Caco-2 (cell line): ENCODE measurements at regions of chr14 and their contacts with region 1.

Region 1: DNA sequence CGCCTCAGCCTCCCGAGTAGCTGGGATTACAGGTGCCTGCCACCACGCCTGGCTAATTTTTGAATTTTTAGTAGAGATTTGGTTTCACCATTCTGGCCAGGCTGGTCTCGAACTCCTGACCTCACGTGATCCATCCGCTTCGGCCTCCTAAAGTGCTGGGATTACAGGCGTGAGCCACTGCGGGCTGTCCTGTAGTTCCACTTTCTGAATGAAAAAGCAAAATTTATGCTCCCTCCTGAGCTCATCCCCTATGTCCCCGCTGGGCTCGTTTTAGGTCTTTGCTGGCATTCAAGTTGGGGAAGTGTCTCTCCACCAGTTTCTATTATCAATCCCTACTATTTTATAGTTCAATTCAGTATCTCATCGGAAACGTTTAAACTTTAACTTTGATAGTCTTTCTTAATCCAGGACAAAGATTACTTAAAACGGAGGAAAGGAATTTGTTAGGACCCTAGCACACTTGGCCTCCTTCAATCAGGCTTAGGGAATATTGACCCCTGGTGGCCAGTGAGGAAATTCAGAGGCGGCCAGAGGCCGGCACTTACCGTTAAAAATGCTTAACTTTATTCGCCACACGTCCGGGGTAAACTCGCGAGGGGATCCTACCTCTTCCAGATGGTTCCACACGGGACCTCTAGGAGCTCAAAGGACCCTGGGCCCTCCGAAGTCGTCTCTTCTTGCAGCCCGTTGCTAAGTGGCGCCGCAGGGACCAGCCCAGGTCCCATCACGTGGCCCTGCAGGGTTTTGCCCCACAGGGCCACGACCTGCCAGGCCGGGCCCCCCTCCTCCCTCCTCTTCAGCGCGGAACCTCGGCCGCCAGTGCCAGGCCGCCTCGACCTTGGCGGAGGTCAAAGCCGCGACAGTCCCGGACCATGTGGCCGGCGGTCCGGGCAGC is 11.4 kb upstream of the DNAL1 start:
- DNase-seq: peak; percentile 56 to 72
- H3K4me3 ChIP-seq: no peak overlapping the region
- H3K4me3 Mint-ChIP-seq: peak overlapping the region; percentile 47
- H3K27ac Mint-ChIP-seq: no peak overlapping the region
- H3K4me1 ChIP-seq: peaks cover 7% of the 10 kb centered on the region; the same call in 1 of the 2 replicates
- H3K4me1 Mint-ChIP-seq: peaks cover 15% of the 10 kb centered on the region
- H3K27me3 ChIP-seq: no peaks in the 10 kb centered on the region
- H3K27me3 Mint-ChIP-seq: no peaks in the 10 kb centered on the region
- CTCF ChIP-seq: peak; percentile 86 to 87

Region 2: DNA sequence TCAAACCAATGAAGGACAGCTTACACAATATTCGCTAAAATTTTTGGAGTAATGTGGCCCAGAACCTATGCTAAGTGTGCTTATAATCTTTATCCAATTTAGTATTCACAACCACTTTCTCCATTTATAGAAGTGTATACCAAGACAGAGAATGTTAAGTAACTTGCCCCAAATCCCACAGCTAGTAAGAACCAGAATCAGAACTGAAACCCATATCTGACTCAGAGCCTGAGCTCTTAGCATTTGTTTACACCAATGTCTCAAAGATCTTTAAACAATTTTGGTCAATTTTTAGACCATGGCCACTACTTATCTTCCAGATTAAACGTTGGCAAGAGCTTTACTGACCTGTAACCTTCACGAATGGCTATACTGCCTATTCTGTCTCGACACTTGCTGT is 343.1 kb before region 1 on chr14:
- CTCF ChIA-PET with region 1: no interaction called
- POLR2A ChIA-PET with region 1: no interaction called
- intact Hi-C with region 1: loop called (anchors 5 kb)
- DNase-seq: no peak
- H3K4me3 ChIP-seq: no peak overlapping the region
- H3K4me3 Mint-ChIP-seq: no peak overlapping the region
- H3K27ac Mint-ChIP-seq: no peak overlapping the region
- H3K4me1 ChIP-seq: peaks cover under 1% of the 10 kb centered on the region
- H3K4me1 Mint-ChIP-seq: no peaks in the 10 kb centered on the region
- H3K27me3 ChIP-seq: no peaks in the 10 kb centered on the region
- H3K27me3 Mint-ChIP-seq: no peaks in the 10 kb centered on the region
- CTCF ChIP-seq: no peak

Region 3: GRCh38 chr14:73491256-73492042 is 141.9 kb before region 1 on chr14:
- CTCF ChIA-PET with region 1: no interaction called
- POLR2A ChIA-PET with region 1: no interaction called
- intact Hi-C with region 1: loop called (anchors 5 kb)
- DNase-seq: peak; percentile 62 to 71
- H3K4me3 ChIP-seq: peak overlapping the region; percentile 71
- H3K4me3 Mint-ChIP-seq: peak overlapping the region; percentile 91
- H3K27ac Mint-ChIP-seq: peak overlapping the region; percentile 86
- H3K4me1 ChIP-seq: peaks cover 18% of the 10 kb centered on the region
- H3K4me1 Mint-ChIP-seq: peaks cover 11% of the 10 kb centered on the region
- H3K27me3 ChIP-seq: no peaks in the 10 kb centered on the region
- H3K27me3 Mint-ChIP-seq: no peaks in the 10 kb centered on the region
- CTCF ChIP-seq: no peak

Region 4: GRCh38 chr14:73503648-73504047 is 129.7 kb before region 1 on chr14:
- CTCF ChIA-PET with region 1: interaction called, 10 read pairs
- POLR2A ChIA-PET with region 1: no interaction called
- intact Hi-C with region 1: loop called (anchors 1 kb)
- DNase-seq: no peak
- H3K4me3 ChIP-seq: no peak overlapping the region
- H3K4me3 Mint-ChIP-seq: no peak overlapping the region
- H3K27ac Mint-ChIP-seq: no peak overlapping the region
- H3K4me1 ChIP-seq: no peaks in the 10 kb centered on the region
- H3K4me1 Mint-ChIP-seq: no peaks in the 10 kb centered on the region
- H3K27me3 ChIP-seq: no peaks in the 10 kb centered on the region
- H3K27me3 Mint-ChIP-seq: no peaks in the 10 kb centered on the region
- CTCF ChIP-seq: no peak

Region 5: DNA sequence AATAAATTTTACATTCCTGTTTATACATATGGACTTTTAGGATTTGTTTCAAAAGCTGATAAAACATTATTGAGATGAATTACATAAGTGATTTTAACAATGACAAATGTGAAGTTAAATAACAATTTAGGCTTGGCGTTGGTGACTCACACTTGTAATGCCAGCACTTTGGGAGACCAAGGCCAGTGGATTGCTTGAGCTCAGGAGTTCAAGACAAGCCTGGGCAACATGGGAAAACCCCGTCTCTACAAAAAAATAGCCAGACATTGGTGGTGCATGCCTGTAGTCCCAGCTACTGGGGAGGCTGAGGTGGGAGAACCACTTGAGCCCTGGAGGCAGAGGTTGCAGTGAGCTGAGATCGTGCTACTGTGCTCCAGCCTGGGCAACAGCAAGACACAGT is 57.0 kb before region 1 on chr14:
- CTCF ChIA-PET with region 1: no interaction called
- POLR2A ChIA-PET with region 1: interaction called, 9 read pairs
- intact Hi-C with region 1: loop called (anchors 10 kb)
- DNase-seq: no peak
- H3K4me3 ChIP-seq: no peak overlapping the region
- H3K4me3 Mint-ChIP-seq: no peak overlapping the region
- H3K27ac Mint-ChIP-seq: no peak overlapping the region
- H3K4me1 ChIP-seq: no peaks in the 10 kb centered on the region
- H3K4me1 Mint-ChIP-seq: no peaks in the 10 kb centered on the region
- H3K27me3 ChIP-seq: no peaks in the 10 kb centered on the region
- H3K27me3 Mint-ChIP-seq: no peaks in the 10 kb centered on the region
- CTCF ChIP-seq: no peak

Region 6: GRCh38 chr14:73591690-73592448 is 41.5 kb before region 1 on chr14 and contains the start of gene ACOT4:
- CTCF ChIA-PET with region 1: no interaction called
- POLR2A ChIA-PET with region 1: no interaction called
- intact Hi-C with region 1: loop called (anchors 2 kb)
- DNase-seq: peak; percentile 59 to 63
- H3K4me3 ChIP-seq: peak within 1 kb of the TSS; percentile 55
- H3K4me3 Mint-ChIP-seq: peak within 1 kb of the TSS; percentile 70
- H3K27ac Mint-ChIP-seq: peak within 1 kb of the TSS; percentile 35
- H3K4me1 ChIP-seq: no peaks in the 10 kb centered on the region
- H3K4me1 Mint-ChIP-seq: no peaks in the 10 kb centered on the region
- H3K27me3 ChIP-seq: no peaks in the 10 kb centered on the region
- H3K27me3 Mint-ChIP-seq: no peaks in the 10 kb centered on the region
- CTCF ChIP-seq: peak in 1 of 2 experiments; percentile 25
- total RNA-seq, gene ACOT4: 2.7 and 3.2 TPM in 2 replicates

Region 7: GRCh38 chr14:73602984-73603383 is 30.4 kb before region 1 on chr14:
- CTCF ChIA-PET with region 1: no interaction called
- POLR2A ChIA-PET with region 1: no interaction called
- intact Hi-C with region 1: no loop called
- DNase-seq: no peak
- H3K4me3 ChIP-seq: no peak overlapping the region
- H3K4me3 Mint-ChIP-seq: no peak overlapping the region
- H3K27ac Mint-ChIP-seq: no peak overlapping the region
- H3K4me1 ChIP-seq: peaks cover 12% of the 10 kb centered on the region
- H3K4me1 Mint-ChIP-seq: peaks cover 12% of the 10 kb centered on the region
- H3K27me3 ChIP-seq: no peaks in the 10 kb centered on the region
- H3K27me3 Mint-ChIP-seq: no peaks in the 10 kb centered on the region
- CTCF ChIP-seq: no peak